A549 (cell line): ENCODE measurements at regions of chr10 and their contacts with region 1.

Region 1: GRCh38 chr10:14487488-14487883 is 156.8 kb upstream of the FRMD4A start:
- DNase-seq: no peak
- ATAC-seq: no peak
- H3K4me3 ChIP-seq: no peak overlapping the region
- H3K27ac ChIP-seq: no peak overlapping the region
- H3K4me1 ChIP-seq: peaks cover 8% of the 10 kb centered on the region
- CTCF ChIP-seq: no peak
- EP300 ChIP-seq: no peak
- POLR2A ChIP-seq: no peak
- RAD21 ChIP-seq: no peak

Region 2: DNA sequence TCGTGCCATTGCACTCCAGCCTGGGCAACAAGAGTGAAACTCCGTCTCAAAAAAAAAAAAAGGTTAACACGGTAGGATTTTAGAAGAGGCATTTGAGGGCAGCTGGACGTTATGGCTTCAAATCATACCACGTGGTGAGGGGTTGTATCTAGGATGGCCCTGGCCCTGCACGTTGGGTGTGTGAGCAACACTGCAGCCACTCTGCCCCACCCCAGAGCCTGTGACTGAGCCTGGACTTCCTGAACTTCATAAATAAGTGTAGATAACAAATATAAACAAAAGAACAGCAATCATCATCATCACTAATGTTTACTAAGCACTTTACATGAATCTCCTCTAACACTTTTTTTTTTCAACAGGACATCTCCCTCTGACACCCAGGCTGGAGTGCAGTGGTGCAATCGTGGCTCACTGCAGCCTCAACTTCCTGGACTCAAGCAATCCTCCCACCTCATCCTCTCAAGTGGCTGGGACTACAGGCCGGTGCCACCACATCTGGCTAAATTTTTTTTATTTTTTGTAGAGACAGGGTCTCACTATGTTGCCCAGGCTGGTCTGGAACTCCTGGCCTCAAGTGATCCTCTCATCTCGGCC is 12.8 kb after region 1 on chr10:
- CTCF ChIA-PET with region 1: interaction called, 20 read pairs
- POLR2A ChIA-PET with region 1: no interaction called
- DNase-seq: peak in 1 of 2 experiments; percentile 11
- ATAC-seq: no peak
- H3K4me3 ChIP-seq: no peak overlapping the region
- H3K27ac ChIP-seq: peak overlapping the region in 1 of 2 experiments; percentile 69; a peak in 1 of 6 replicates
- H3K4me1 ChIP-seq: peaks cover 6% of the 10 kb centered on the region
- CTCF ChIP-seq: no peak
- EP300 ChIP-seq: no peak
- POLR2A ChIP-seq: no peak
- RAD21 ChIP-seq: no peak

Region 3: DNA sequence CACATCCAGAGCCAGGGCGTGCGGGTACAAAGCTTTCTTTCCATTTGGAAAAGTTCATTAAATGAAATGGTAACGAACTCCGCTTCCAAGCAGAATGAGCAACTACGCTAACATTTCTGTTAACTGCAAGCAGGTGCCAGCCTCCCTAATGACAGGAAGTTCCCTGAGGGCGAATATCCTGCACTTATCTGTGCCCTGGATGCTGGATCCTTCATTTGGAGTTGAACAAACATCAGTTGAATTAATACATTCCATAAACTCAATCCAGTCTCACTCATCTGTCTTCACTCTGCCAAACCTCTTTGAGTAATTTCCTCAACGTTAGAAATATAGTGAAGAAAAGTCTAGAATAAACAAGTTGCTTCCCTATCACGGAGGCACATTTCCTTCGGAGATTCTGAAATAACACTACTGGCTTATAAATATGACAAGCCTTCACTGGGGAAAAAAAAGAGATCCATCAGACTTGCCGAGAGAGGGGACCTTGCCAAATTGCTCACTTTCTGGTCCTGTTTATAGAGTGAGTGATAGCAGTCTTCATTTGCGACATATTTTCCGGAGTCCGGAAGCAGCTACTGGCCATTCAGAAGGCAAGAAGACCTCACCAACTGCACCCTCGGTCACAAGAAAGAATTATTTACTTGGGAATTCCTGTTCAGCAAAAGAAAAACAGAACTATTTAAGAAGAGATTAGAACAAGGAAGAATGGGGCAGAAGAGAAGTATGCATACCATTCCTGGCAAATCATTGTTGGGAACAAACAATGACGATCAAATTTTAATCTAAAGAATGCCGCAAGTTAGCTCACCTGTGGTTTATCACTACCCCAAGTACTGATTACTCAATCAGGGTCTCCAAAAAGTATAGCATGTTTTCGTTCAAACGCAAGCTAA is 90.8 kb after region 1 on chr10:
- CTCF ChIA-PET with region 1: no interaction called
- POLR2A ChIA-PET with region 1: no interaction called
- DNase-seq: peak in 1 of 2 experiments; percentile 92
- ATAC-seq: peak; percentile 72 to 80
- H3K4me3 ChIP-seq: peak overlapping the region; percentile 21; the same call in 2 of the 3 replicates
- H3K27ac ChIP-seq: peak overlapping the region; percentile 83 to 88
- H3K4me1 ChIP-seq: peaks cover 84% of the 10 kb centered on the region
- CTCF ChIP-seq: no peak
- EP300 ChIP-seq: peak; percentile 79 to 86; a peak in 3 of 5 replicates
- POLR2A ChIP-seq: no peak
- RAD21 ChIP-seq: peak in 1 of 2 experiments; percentile 38; a peak in 1 of 5 replicates